Endothelial cell of umbilical vein (primary cell): ENCODE measurements at regions of chr3 and their contacts with region 1.

Region 1: GRCh38 chr3:39531650-39532049 is 64.2 kb downstream of the MOBP start:
- DNase-seq: peak; percentile 98
- H3K4me3 ChIP-seq: no peak overlapping the region
- H3K27ac ChIP-seq: peak overlapping the region; percentile 84
- H3K4me1 ChIP-seq: peaks cover 27% of the 10 kb centered on the region
- H3K27me3 ChIP-seq: no peaks in the 10 kb centered on the region
- CTCF ChIP-seq: no peak
- POLR2A ChIP-seq: peak; percentile 43

Region 2: DNA sequence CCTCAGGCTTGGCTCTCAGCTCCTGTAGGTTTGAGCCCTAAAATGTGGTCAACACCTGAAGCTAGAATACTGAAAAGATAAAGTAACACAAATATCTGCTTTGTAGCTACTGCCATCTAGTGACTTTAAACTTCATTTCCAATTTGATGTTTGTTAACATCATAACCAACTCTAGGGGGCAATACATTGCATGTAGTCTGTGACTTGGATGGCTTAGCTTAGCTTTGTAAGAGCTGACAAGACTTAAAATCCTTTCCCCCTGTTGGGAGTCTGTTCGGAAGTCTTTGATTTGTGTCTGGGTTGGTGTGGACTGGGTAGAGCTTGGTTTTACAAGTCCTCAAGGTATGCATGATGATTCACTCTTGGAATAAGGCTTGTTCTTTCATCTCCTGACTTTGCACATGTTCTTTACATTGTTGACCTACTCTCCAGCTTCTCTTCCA is 531.6 kb before region 1 on chr3:
- CTCF ChIA-PET with region 1: no interaction called
- POLR2A ChIA-PET with region 1: no interaction called
- dilution Hi-C with region 1: no loop called
- intact Hi-C with region 1: no loop called
- DNase-seq: peak; percentile 70
- H3K4me3 ChIP-seq: no peak overlapping the region
- H3K27ac ChIP-seq: no peak overlapping the region
- H3K4me1 ChIP-seq: no peaks in the 10 kb centered on the region
- H3K27me3 ChIP-seq: no peaks in the 10 kb centered on the region
- CTCF ChIP-seq: peak; percentile 62 to 71
- POLR2A ChIP-seq: no peak

Region 3: DNA sequence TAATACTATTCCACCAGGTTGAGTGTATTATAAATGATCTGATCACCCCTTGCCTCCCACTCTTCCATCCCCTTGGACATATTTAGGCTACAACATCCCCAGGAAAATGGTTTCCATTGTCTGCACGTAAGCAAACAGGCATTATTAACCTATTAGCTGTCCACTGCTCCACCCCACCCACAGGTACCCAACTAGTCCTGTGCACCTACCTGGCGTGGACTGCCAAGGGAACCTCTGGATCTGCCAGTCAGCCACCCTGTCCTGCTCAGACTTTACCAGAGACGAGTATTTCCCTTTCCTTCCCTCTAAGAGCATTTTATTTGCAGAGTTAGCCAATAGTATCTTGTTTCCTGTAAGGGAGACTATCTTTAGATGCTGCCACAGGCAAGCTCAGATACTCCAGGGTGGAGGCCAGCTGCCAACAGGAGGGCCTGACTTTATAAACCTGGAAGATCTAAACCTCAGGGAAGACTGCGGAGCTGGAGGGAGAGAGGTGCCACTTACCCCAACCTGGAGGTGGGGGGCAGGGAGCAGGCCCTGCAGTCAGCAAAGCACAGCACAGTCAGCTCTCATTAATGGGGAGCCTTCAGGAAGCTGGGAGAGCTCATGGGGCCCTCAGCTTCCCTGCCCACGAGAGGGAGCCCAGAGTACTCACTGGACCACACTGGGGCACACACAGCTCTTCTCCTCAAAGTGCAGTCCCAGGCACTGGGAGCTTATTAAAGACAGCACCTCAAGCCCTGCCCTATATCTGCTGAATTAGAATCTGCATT is 251.7 kb before region 1 on chr3 and contains the start of gene CX3CR1:
- CTCF ChIA-PET with region 1: no interaction called
- POLR2A ChIA-PET with region 1: no interaction called
- dilution Hi-C with region 1: no loop called
- intact Hi-C with region 1: no loop called
- DNase-seq: no peak
- H3K4me3 ChIP-seq: no peak within 1 kb of the TSS
- H3K27ac ChIP-seq: no peak within 1 kb of the TSS
- H3K4me1 ChIP-seq: peaks cover 5% of the 10 kb centered on the region
- H3K27me3 ChIP-seq: peaks cover 3 to 5% of the 10 kb centered on the region in 2 experiments
- CTCF ChIP-seq: no peak
- POLR2A ChIP-seq: no peak
- total RNA-seq, gene CX3CR1: not detected in 2 replicates

Region 4: GRCh38 chr3:39468108-39468436 is 63.6 kb before region 1 on chr3:
- CTCF ChIA-PET with region 1: no interaction called
- POLR2A ChIA-PET with region 1: no interaction called
- dilution Hi-C with region 1: no loop called
- intact Hi-C with region 1: no loop called
- DNase-seq: no peak
- H3K4me3 ChIP-seq: no peak overlapping the region
- H3K27ac ChIP-seq: no peak overlapping the region
- H3K4me1 ChIP-seq: no peaks in the 10 kb centered on the region
- H3K27me3 ChIP-seq: peaks cover 0 to 2% of the 10 kb centered on the region in 2 experiments
- CTCF ChIP-seq: no peak
- POLR2A ChIP-seq: no peak

Region 5: DNA sequence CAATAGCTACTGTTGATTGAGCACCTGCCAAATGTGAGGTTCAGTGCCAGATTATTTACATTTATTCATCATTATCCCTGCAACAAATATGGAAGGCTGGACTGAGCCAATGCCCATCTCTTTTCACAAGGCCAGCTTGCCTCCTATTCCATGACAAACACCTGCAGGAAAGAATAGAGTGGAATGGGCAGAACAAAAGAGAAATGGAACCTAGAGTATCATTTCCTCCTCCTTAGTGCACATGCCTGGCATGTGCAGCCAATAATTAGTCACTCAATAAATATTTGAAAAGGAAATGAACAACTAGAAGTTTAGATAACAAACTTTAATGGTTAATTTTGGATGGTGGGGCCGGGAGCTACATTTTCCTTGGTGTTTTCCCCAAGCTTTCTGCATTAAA is 216.4 kb after region 1 on chr3:
- CTCF ChIA-PET with region 1: no interaction called
- POLR2A ChIA-PET with region 1: no interaction called
- dilution Hi-C with region 1: no loop called
- intact Hi-C with region 1: loop called (anchors 5 kb)
- DNase-seq: peak; percentile 78
- H3K4me3 ChIP-seq: no peak overlapping the region
- H3K27ac ChIP-seq: peak overlapping the region; percentile 87
- H3K4me1 ChIP-seq: peaks cover 53% of the 10 kb centered on the region
- H3K27me3 ChIP-seq: no peaks in the 10 kb centered on the region
- CTCF ChIP-seq: no peak
- POLR2A ChIP-seq: no peak

Region 6: DNA sequence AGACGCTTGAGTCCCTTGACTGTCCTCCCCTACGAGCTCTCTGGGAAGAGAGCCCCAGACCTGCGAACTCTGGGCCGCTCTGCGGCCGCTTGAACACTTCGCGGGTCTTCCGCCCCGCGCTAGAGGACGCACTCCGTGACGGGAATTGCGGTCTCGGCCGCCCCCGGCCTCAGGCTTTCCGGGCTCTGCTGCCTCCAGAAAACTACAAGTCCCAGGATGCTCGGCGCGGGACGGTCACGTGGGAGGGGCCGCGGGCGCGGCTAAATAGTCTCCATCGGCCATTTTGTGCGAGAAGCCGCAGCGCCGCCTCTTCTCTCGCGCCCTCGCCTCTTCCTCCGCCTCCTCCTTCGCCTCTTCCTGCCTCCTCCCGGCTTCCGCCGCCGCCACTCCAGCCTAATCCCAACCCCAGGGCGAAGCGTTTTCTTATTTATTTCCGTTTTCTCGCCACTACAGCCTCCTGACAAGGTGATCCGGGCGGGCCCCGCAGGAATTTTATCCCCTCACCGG is 777.8 kb after region 1 on chr3 and contains the start of gene EIF1B:
- CTCF ChIA-PET with region 1: interaction called, 3 read pairs
- POLR2A ChIA-PET with region 1: no interaction called
- dilution Hi-C with region 1: no loop called
- intact Hi-C with region 1: loop called (anchors 2 kb)
- DNase-seq: peak; percentile 99
- H3K4me3 ChIP-seq: peak within 1 kb of the TSS; percentile 85 to 100 (median 98)
- H3K27ac ChIP-seq: peak within 1 kb of the TSS; percentile 93
- H3K4me1 ChIP-seq: peaks cover 14% of the 10 kb centered on the region
- H3K27me3 ChIP-seq: no peaks in the 10 kb centered on the region
- CTCF ChIP-seq: peak; percentile 96 to 97
- POLR2A ChIP-seq: peak; percentile 96
- total RNA-seq, gene EIF1B: 44.1 and 46.0 TPM in 2 replicates

Region 7: GRCh38 chr3:40505599-40506462 is 974.2 kb after region 1 on chr3 and contains the start of gene ZNF620:
- CTCF ChIA-PET with region 1: no interaction called
- POLR2A ChIA-PET with region 1: no interaction called
- dilution Hi-C with region 1: no loop called
- intact Hi-C with region 1: loop called (anchors 10 kb)
- DNase-seq: peak; percentile 88
- H3K4me3 ChIP-seq: peak within 1 kb of the TSS; percentile 66 to 78 (median 76)
- H3K27ac ChIP-seq: peak within 1 kb of the TSS; percentile 96
- H3K4me1 ChIP-seq: peaks cover 19% of the 10 kb centered on the region
- H3K27me3 ChIP-seq: no peaks in the 10 kb centered on the region
- CTCF ChIP-seq: peak; percentile 34 to 51
- POLR2A ChIP-seq: no peak
- total RNA-seq, gene ZNF620: 3.6 and 4.0 TPM in 2 replicates